ENCODE measurements at regions of chr22 and their contacts with region 1.

Region 1: DNA sequence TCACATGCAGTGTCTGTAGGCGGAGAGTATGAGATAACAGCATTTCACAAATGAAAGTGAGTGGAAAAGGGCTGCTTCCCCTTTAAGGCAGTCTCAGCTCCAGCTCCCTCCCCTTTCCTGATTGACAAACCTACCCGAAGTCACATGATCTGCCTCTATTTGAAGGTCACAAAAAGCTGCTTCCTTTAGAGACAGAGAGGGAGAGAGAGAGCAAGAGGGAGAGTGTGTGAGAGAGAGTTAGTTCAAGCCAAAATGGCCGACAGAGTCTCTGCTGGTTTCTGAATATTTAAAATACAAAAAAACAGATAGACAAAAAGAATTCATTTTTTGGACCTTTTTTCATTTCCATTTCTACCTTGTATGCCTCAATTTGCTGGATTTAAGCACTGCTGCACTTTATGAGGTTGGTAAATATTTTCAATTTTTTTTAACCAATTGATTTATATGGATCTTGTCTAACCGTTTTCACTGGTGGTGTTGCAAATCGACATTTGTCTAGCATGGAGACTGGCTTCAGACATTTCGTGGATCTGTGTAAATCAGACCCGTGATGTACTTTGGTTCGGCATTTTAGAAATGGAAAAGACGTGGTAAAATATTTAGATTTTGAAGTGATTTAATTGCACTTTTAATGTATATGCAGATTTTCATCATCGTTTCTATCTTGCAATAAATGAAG is at the start of gene TNRC6B:
- DNase-seq: peak; percentile 91
- ATAC-seq: peak; percentile 80
- H3K4me3 Mint-ChIP-seq: peak within 1 kb of the TSS; percentile 94
- H3K27ac Mint-ChIP-seq: peak within 1 kb of the TSS; percentile 91
- H3K4me1 Mint-ChIP-seq: peaks cover 48% of the 10 kb centered on the region
- H3K27me3 Mint-ChIP-seq: no peaks in the 10 kb centered on the region
- total RNA-seq, gene TNRC6B: 62.9 to 63.3 TPM

Region 2: DNA sequence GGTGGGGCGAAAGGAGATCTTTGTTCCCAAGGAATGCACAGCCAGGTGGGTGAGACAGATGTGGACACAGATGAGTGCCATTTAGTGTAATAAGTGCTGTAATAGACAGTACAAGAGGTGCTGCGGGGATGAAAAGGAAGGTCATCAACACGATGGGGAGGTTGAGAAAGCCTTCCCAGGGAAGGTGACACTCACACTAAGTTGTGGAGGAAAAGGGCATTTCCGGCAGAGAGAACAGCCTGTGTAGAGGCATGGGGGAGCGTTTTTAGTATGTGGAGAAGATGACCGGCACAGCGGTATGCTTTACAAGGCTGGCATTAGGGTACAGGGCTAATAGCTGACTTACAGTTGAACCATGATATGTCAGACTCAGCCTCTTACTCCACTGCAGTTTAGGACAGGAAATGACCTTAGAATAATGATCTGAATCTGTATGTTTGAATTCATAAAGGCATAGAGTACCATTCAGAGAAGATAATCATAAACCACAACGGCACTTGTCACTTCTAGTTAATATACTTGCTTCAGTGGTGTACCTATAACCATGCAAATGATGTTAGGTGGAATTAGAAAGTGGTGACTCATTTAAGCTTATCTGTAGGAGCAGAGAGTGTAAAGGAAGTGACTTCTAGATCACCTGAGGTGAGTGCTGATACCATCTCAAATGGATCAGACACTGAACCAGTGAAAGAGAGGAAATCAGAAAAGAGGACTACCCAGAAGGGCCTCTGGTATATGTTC is 122.6 kb before region 1 on chr22:
- CTCF ChIA-PET with region 1: interaction called, 14 read pairs
- POLR2A ChIA-PET with region 1: interaction called, 6 read pairs
- DNase-seq: peak; percentile 46
- ATAC-seq: peak; percentile 94
- H3K4me3 Mint-ChIP-seq: peak overlapping the region; percentile 55
- H3K27ac Mint-ChIP-seq: peak overlapping the region; percentile 92
- H3K4me1 Mint-ChIP-seq: peaks cover 78% of the 10 kb centered on the region
- H3K27me3 Mint-ChIP-seq: no peaks in the 10 kb centered on the region

Region 3: DNA sequence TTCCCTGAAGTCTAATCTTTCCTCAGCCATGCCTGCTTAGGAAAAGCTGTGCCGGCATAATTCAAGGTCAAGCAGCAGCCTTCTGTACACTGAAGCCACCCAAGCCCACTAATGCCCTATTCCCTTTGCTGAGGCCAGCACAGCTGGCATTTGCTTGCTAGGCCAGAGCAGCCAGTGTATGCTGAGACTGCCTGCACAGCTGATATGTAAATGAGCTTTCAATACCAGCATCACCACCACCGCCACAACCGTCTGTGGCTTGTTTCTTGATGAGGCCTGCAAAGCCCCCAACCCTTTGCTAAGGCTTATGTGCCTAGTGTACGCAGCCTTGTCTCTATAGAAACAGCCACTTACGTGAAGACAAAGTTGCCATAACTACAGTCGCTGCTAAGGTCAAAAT is 56.4 kb before region 1 on chr22:
- CTCF ChIA-PET with region 1: no interaction called
- POLR2A ChIA-PET with region 1: no interaction called
- DNase-seq: peak; percentile 48
- ATAC-seq: peak; percentile 56
- H3K4me3 Mint-ChIP-seq: no peak overlapping the region
- H3K27ac Mint-ChIP-seq: peak overlapping the region; percentile 41
- H3K4me1 Mint-ChIP-seq: peaks cover 53% of the 10 kb centered on the region
- H3K27me3 Mint-ChIP-seq: no peaks in the 10 kb centered on the region

Region 4: DNA sequence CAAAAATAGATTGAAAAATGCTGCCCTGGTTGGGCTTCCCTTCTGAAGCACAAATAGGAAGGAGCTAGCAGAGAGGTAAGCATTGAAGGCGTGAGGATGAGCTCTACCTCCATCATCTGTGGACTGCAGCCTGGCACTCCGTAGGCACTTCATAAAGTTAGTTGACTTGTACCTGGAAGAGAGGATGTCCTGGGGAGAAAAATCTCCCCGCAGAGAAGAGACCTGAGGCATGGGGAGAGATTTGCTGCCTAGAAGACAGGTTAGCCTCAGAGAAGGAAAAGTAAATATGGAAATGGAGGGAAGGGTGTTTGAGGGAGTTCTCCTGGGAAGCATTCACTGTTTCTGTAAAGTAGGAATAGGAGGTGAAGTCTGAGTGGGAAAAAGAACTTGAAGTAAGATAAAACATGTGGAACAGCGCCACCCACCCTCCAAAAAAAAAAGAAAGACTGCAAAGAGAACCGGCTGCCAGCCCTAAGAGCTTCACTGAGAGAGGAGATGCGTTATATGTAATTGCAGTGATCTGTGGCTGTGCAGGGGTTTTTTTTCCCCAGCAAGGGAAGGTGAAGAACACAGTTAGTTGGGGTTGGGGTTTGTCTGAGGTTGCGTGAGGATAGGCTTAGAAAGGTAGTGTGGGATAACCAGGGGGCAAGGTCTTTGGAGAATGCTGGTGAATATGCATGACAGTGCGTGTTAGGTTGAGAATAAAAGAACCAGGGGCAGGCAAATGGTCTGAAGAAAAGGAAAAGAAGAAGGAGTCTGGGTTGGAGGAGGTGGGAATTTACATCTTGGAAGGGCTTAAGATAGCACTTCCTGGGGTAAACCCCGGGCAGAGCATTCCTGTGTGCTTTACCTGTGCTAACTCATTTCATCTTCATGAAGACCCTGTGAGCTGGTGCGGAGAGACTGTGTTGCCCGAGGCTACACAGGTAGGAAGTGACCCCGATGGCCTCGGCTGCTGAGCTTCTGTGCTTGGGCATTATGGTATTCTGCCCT is 15.8 kb after region 1 on chr22:
- CTCF ChIA-PET with region 1: interaction called, 35 read pairs
- POLR2A ChIA-PET with region 1: interaction called, 11 read pairs
- DNase-seq: no peak
- ATAC-seq: no peak
- H3K4me3 Mint-ChIP-seq: no peak overlapping the region
- H3K27ac Mint-ChIP-seq: peak overlapping the region; percentile 7
- H3K4me1 Mint-ChIP-seq: peaks cover 56% of the 10 kb centered on the region
- H3K27me3 Mint-ChIP-seq: no peaks in the 10 kb centered on the region

Region 5: GRCh38 chr22:40326905-40327735 is 149.2 kb after region 1 on chr22:
- CTCF ChIA-PET with region 1: interaction called, 3 read pairs
- POLR2A ChIA-PET with region 1: interaction called, 11 read pairs
- DNase-seq: no peak
- ATAC-seq: peak; percentile 24
- H3K4me3 Mint-ChIP-seq: no peak overlapping the region
- H3K27ac Mint-ChIP-seq: peak overlapping the region; percentile 55
- H3K4me1 Mint-ChIP-seq: peaks cover 93% of the 10 kb centered on the region
- H3K27me3 Mint-ChIP-seq: no peaks in the 10 kb centered on the region

Measured in activated CD8-positive, alpha-beta T cell treated with anti-CD3 and anti-CD28 coated beads, Interleukin-2, amount 10 ng/mL, durations not matched to agents 7 days and 5 days (primary cell).